ENCODE measurements at regions of chr5 and their contacts with region 1.

Region 1: GRCh38 chr5:5270958-5271605 is 131.0 kb downstream of the ADAMTS16 start:
- DNase-seq: peak; percentile 96
- H3K4me3 ChIP-seq: peak overlapping the region; percentile 31
- H3K27ac ChIP-seq: peak overlapping the region; percentile 66
- H3K4me1 ChIP-seq: peaks cover 18% of the 10 kb centered on the region
- H3K27me3 ChIP-seq: no peaks in the 10 kb centered on the region
- CTCF ChIP-seq: no peak

Region 2: DNA sequence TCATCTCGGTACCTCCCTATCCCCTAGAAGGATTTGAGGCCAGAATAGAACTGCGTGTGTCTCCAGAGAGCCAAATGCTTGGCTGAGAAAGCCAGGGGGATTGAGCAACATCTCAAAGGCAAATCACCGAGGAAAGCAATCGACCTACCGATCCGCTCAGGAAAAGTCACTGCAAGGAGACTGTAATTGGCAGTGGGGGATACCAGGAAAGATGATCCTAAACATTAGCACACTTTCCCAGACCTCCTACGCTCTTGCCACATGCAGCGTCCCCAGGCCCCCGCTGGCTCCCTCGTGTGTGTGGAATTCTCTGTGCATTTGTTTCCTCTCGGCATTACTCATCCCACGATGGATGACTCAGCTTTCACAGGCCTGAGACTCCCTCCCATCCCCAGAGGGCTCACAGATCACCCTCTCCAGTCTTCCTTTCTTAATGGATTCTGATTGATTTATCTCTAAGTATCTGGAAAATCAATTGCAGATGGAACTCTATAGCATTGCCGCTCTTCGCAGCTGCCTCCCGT is 69.2 kb after region 1 on chr5:
- CTCF ChIA-PET with region 1: no interaction called
- POLR2A ChIA-PET with region 1: no interaction called
- intact Hi-C with region 1: loop called (anchors 5 kb)
- DNase-seq: peak; percentile 97
- H3K4me3 ChIP-seq: no peak overlapping the region
- H3K27ac ChIP-seq: peak overlapping the region; percentile 63
- H3K4me1 ChIP-seq: peaks cover 47% of the 10 kb centered on the region
- H3K27me3 ChIP-seq: no peaks in the 10 kb centered on the region
- CTCF ChIP-seq: peak; percentile 62